Endothelial cell of umbilical vein (primary cell): ENCODE measurements at regions of chr4 and their contacts with region 1.

Region 1: GRCh38 chr4:144583658-144584057 is 62.3 kb upstream of the HHIP start:
- DNase-seq: peak; percentile 56
- H3K4me3 ChIP-seq: no peak overlapping the region
- H3K27ac ChIP-seq: peak overlapping the region; percentile 96
- H3K4me1 ChIP-seq: peaks cover 64% of the 10 kb centered on the region
- H3K27me3 ChIP-seq: no peaks in the 10 kb centered on the region
- CTCF ChIP-seq: no peak
- POLR2A ChIP-seq: no peak

Region 2: DNA sequence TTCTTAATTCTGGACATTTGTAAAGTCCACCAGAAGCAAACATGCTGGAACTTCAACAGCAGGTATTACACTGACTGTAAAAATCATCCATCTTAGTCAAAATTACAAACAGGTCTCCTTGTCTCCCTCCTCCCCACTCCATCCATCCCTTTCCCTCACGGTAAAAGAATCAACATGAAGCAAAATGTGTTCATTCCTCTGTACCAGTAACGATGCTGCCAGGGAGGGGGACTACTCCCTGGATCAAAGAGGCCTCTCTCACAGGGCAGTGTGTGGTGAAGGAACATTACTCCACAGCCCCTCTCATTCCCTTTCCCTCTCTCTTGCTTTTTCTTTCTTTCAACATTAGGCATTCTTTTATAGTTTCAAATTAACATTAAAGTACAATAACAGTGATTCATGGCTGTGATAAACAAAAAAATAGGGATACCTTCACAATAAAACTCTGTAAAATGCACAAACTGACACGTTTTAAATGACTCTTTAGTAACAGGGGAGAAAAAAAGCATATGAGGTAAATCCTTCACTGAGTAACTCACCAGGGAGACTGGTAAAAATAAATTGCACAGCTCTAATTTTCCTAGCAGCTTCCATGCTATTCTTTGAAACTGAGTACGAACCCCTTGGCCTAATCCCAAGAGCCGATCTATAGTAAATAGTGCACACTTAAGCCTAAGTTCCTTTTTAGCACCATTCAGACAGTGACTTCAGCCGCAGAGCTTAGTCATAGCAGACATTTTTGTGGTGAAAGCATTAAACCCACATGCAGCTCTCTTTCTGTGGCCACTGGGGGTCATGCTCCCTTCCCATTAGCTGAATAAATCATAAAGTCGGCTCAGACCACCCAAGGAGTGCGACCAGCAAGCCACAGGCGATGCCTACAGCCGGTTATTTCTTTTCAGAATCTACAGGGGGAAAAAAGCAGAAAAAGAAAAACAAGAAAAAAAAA is 227.6 kb before region 1 on chr4:
- CTCF ChIA-PET with region 1: no interaction called
- POLR2A ChIA-PET with region 1: no interaction called
- dilution Hi-C with region 1: no loop called
- intact Hi-C with region 1: loop called (anchors 1 kb)
- DNase-seq: peak; percentile 88
- H3K4me3 ChIP-seq: no peak overlapping the region
- H3K27ac ChIP-seq: peak overlapping the region; percentile 15
- H3K4me1 ChIP-seq: peaks cover 16% of the 10 kb centered on the region
- H3K27me3 ChIP-seq: no peaks in the 10 kb centered on the region
- CTCF ChIP-seq: peak in 1 of 2 donors; percentile 28
- POLR2A ChIP-seq: no peak

Region 3: DNA sequence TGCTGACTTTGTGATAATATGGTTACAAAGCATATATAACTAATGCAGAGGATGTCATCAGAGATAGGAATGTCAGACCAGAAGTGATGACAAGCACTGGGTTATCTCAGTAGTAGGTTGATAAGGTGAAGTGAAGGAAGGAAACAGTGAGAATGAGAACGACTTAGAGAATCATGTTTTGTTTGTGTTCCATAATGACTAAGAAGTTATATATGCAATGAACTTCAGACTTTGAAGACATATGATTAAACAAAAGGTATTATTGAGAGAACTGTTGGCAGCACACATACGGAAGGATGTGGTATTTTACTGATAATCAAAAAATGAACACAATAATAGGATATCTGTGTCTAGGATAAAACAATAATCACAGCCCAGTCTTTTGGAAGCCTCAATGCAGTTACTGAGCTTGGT is 44.0 kb after region 1 on chr4:
- CTCF ChIA-PET with region 1: interaction called, 7 read pairs
- POLR2A ChIA-PET with region 1: interaction called, 7 read pairs
- dilution Hi-C with region 1: no loop called
- intact Hi-C with region 1: loop called (anchors 1 kb)
- DNase-seq: peak; percentile 96
- H3K4me3 ChIP-seq: no peak overlapping the region
- H3K27ac ChIP-seq: peak overlapping the region; percentile 99
- H3K4me1 ChIP-seq: peaks cover 36% of the 10 kb centered on the region
- H3K27me3 ChIP-seq: no peaks in the 10 kb centered on the region
- CTCF ChIP-seq: no peak
- POLR2A ChIP-seq: peak; percentile 83

Region 4: DNA sequence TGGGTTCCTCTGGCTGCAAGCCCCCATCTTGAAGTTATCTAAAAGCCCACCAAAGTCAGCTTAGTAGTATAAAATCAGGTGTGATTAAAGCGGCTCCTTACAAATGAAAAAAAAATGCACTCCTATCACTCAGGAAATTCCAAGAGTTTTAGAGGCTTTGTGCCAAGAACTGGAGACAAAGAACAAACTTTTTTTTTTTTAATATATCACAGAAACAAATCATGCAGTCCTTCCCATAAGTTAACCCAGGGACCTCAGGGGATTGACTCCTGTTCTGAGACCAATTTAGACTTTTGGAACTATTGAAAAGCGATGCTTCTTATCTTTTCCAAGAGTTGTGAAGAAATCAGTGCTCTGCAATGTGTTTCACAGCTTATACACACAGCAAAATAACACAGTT is 115.9 kb after region 1 on chr4:
- CTCF ChIA-PET with region 1: no interaction called
- POLR2A ChIA-PET with region 1: no interaction called
- dilution Hi-C with region 1: no loop called
- intact Hi-C with region 1: loop called (anchors 2 kb)
- DNase-seq: peak; percentile 90
- H3K4me3 ChIP-seq: peak overlapping the region in 1 of 3 experiments; percentile 44
- H3K27ac ChIP-seq: peak overlapping the region; percentile 94
- H3K4me1 ChIP-seq: peaks cover 82% of the 10 kb centered on the region
- H3K27me3 ChIP-seq: no peaks in the 10 kb centered on the region
- CTCF ChIP-seq: no peak
- POLR2A ChIP-seq: peak; percentile 74